CD8-positive, alpha-beta T cell (primary cell): ENCODE measurements at regions of chr4 and their contacts with region 1.

Region 1: DNA sequence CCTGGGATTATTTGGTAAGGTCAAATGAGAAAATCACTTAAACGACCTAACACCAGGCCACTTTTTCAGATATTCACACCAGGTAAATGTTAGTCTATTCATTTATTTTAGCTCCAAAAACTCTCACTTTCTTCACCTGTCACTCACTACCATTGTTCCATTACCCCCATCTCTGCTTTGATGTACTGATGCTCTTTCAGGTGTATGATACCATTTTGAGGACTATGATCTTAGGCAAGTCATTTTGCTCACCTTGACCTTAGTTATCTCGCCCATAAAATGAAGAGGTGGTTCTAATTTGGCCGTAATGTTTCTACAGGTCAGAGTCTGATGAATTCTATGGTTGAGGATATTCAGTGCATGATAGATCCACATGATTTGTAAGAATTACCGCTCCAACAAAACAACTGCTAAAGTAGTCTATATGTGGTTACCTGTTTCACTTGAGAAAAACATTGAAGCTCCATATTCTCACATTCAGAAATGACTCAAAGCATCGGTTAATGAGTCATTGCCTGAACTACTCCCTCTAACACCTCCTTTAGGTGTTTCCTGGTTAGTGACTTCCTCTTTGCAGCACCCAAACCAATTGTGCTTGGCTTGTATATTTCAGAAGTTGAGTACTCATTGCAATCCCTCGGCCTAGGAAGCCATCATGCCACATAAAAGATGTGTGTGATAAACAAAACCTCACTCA is 4.5 kb downstream of the DTHD1 start:
- DNase-seq: peak in 8 of 9 experiments; percentile 12 to 93 (median 58)
- ATAC-seq: peak; percentile 87
- H3K4me3 ChIP-seq: peak overlapping the region in 1 of 2 experiments; percentile 57
- H3K4me3 Mint-ChIP-seq: peak overlapping the region; percentile 59
- H3K27ac ChIP-seq: peak overlapping the region; percentile 54 to 87
- H3K27ac Mint-ChIP-seq: peak overlapping the region; percentile 92
- H3K4me1 ChIP-seq: peaks cover 11% of the 10 kb centered on the region
- H3K4me1 Mint-ChIP-seq: peaks cover 49% of the 10 kb centered on the region
- H3K27me3 ChIP-seq: no peaks in the 10 kb centered on the region
- H3K27me3 Mint-ChIP-seq: no peaks in the 10 kb centered on the region
- CTCF ChIP-seq: no peak

Region 2: DNA sequence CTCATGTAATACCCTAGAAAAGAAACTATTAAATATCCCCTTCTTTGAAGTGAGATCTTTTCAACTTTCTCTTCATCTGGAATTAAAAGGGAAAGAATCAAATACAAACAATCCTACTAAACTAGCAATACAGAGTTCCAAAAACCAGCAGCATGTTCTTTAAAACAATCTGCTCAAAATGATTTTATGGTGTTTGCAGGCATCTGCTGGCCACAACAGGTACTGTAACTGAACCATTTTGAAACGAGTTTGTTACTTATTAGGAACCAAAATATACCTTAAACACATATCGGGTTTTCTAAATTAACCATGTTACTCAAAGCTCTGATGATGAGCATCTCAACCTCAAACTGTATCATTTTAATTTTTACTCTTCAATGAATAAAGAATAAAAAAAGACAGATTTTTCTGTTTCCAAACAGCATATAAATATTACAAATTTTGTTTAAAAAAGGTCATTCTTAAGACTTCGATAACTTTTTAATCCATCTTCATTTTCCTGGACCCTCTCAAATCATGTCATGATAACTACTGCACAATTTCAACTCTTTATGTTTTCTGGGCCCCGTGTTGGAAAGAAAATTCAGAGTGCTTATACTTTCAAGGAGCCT is 98.1 kb before region 1 on chr4:
- CTCF ChIA-PET with region 1: no interaction called
- POLR2A ChIA-PET with region 1: interaction called, 4 read pairs
- intact Hi-C with region 1: loop called in 1 of 2 experiments (anchors 5 kb)
- DNase-seq: peak in 2 of 9 experiments; percentile 47 to 59
- ATAC-seq: no peak
- H3K4me3 ChIP-seq: no peak overlapping the region
- H3K4me3 Mint-ChIP-seq: no peak overlapping the region
- H3K27ac ChIP-seq: peak overlapping the region in 1 of 2 experiments; percentile 45
- H3K27ac Mint-ChIP-seq: no peak overlapping the region
- H3K4me1 ChIP-seq: peaks cover 20% of the 10 kb centered on the region
- H3K4me1 Mint-ChIP-seq: peaks cover 44% of the 10 kb centered on the region
- H3K27me3 ChIP-seq: no peaks in the 10 kb centered on the region
- H3K27me3 Mint-ChIP-seq: no peaks in the 10 kb centered on the region
- CTCF ChIP-seq: peak; percentile 72

Region 3: GRCh38 chr4:36208893-36209473 is 76.9 kb before region 1 on chr4:
- CTCF ChIA-PET with region 1: interaction called, 4 read pairs
- POLR2A ChIA-PET with region 1: interaction called, 3 read pairs
- intact Hi-C with region 1: loop called (anchors 2 to 5 kb)
- DNase-seq: peak in 8 of 9 experiments; percentile 16 to 79 (median 51)
- ATAC-seq: peak; percentile 82
- H3K4me3 ChIP-seq: peak overlapping the region in 1 of 2 experiments; percentile 6
- H3K4me3 Mint-ChIP-seq: peak overlapping the region; percentile 54
- H3K27ac ChIP-seq: peak overlapping the region in 1 of 2 experiments; percentile 51
- H3K27ac Mint-ChIP-seq: peak overlapping the region; percentile 86
- H3K4me1 ChIP-seq: peaks cover 17% of the 10 kb centered on the region
- H3K4me1 Mint-ChIP-seq: peaks cover 68% of the 10 kb centered on the region
- H3K27me3 ChIP-seq: no peaks in the 10 kb centered on the region
- H3K27me3 Mint-ChIP-seq: no peaks in the 10 kb centered on the region
- CTCF ChIP-seq: no peak

Region 4: GRCh38 chr4:36255577-36255976 is 30.4 kb before region 1 on chr4:
- CTCF ChIA-PET with region 1: no interaction called
- POLR2A ChIA-PET with region 1: interaction called, 8 read pairs
- intact Hi-C with region 1: loop called (anchors 1 kb)
- DNase-seq: peak; percentile 26 to 95 (median 63)
- ATAC-seq: peak; percentile 93
- H3K4me3 ChIP-seq: no peak overlapping the region
- H3K4me3 Mint-ChIP-seq: peak overlapping the region; percentile 76
- H3K27ac ChIP-seq: peak overlapping the region; percentile 7 to 62
- H3K27ac Mint-ChIP-seq: peak overlapping the region; percentile 89
- H3K4me1 ChIP-seq: peaks cover 35% of the 10 kb centered on the region
- H3K4me1 Mint-ChIP-seq: peaks cover 51% of the 10 kb centered on the region
- H3K27me3 ChIP-seq: no peaks in the 10 kb centered on the region
- H3K27me3 Mint-ChIP-seq: no peaks in the 10 kb centered on the region
- CTCF ChIP-seq: no peak

Region 5: GRCh38 chr4:36269101-36269500 is 16.8 kb before region 1 on chr4:
- CTCF ChIA-PET with region 1: interaction called, 9 read pairs
- POLR2A ChIA-PET with region 1: interaction called, 5 read pairs
- intact Hi-C with region 1: loop called (anchors 1 to 2 kb)
- DNase-seq: peak in 5 of 9 experiments; percentile 37 to 94 (median 73)
- ATAC-seq: peak; percentile 95
- H3K4me3 ChIP-seq: no peak overlapping the region
- H3K4me3 Mint-ChIP-seq: peak overlapping the region; percentile 4
- H3K27ac ChIP-seq: peak overlapping the region; percentile 16 to 78
- H3K27ac Mint-ChIP-seq: peak overlapping the region; percentile 79
- H3K4me1 ChIP-seq: peaks cover 18% of the 10 kb centered on the region
- H3K4me1 Mint-ChIP-seq: peaks cover 44% of the 10 kb centered on the region
- H3K27me3 ChIP-seq: no peaks in the 10 kb centered on the region
- H3K27me3 Mint-ChIP-seq: no peaks in the 10 kb centered on the region
- CTCF ChIP-seq: no peak

Region 6: GRCh38 chr4:36325499-36325898 is 39.6 kb after region 1 on chr4:
- CTCF ChIA-PET with region 1: interaction called, 3 read pairs
- POLR2A ChIA-PET with region 1: no interaction called
- intact Hi-C with region 1: loop called in 1 of 2 experiments (anchors 5 kb)
- DNase-seq: peak in 2 of 9 experiments; percentile 60 to 75
- ATAC-seq: no peak
- H3K4me3 ChIP-seq: no peak overlapping the region
- H3K4me3 Mint-ChIP-seq: no peak overlapping the region
- H3K27ac ChIP-seq: peak overlapping the region in 1 of 2 experiments; percentile 11
- H3K27ac Mint-ChIP-seq: peak overlapping the region; percentile 55
- H3K4me1 ChIP-seq: peaks cover 27% of the 10 kb centered on the region
- H3K4me1 Mint-ChIP-seq: peaks cover 46% of the 10 kb centered on the region
- H3K27me3 ChIP-seq: no peaks in the 10 kb centered on the region
- H3K27me3 Mint-ChIP-seq: no peaks in the 10 kb centered on the region
- CTCF ChIP-seq: no peak